ENCODE measurements at regions of chr1 and their contacts with region 1.

Region 1: GRCh38 chr1:79460773-79461436 is 454.4 kb upstream of the ADGRL4 start:
- H3K4me3 Mint-ChIP-seq: no peak overlapping the region
- H3K27ac Mint-ChIP-seq: no peak overlapping the region
- H3K4me1 Mint-ChIP-seq: no peaks in the 10 kb centered on the region
- H3K27me3 Mint-ChIP-seq: no peaks in the 10 kb centered on the region

Region 2: DNA sequence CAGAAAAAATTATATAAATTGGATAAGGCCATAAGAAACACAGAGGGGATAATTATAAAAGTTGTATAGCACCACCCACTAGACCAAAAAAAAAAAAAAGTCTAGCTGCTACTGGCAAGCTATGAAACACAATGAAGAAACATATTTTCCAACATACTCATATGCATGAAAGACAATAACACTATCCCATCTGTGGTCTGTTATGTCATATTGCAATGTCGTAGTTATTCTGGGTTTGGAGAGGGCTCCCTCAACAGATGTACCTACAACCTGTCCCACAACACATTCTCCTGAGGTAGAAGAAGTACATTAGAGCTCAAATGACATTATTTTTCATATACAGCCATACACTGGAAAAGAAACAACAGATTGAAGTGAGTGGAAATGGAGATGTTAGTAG is 63.2 kb after region 1 on chr1:
- intact Hi-C with region 1: loop called (anchors 10 kb)
- H3K4me3 Mint-ChIP-seq: no peak overlapping the region
- H3K27ac Mint-ChIP-seq: no peak overlapping the region
- H3K4me1 Mint-ChIP-seq: no peaks in the 10 kb centered on the region
- H3K27me3 Mint-ChIP-seq: no peaks in the 10 kb centered on the region

Region 3: DNA sequence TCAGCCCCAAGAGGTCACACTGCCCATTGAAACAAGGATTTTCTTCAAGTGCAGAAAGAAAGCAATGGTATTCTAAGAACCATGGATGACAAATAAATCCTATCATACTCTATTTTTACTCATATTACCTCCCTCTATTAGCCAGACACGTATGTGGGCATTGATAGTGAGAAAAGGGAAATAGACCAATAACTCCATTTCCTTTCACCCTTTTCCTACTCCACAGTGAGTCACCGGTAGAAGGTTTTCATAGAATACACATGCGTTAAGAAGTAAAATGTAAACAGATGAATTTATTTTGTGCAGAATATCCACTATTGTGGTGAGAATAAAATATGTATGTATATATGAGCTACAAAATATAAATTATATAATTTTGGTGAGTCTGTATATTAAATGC is 114.5 kb after region 1 on chr1:
- intact Hi-C with region 1: no loop called
- H3K4me3 Mint-ChIP-seq: no peak overlapping the region
- H3K27ac Mint-ChIP-seq: no peak overlapping the region
- H3K4me1 Mint-ChIP-seq: no peaks in the 10 kb centered on the region
- H3K27me3 Mint-ChIP-seq: no peaks in the 10 kb centered on the region

Measured in dendritic cell treated with granulocyte-macrophage colony-stimulating factor and Interleukin-4, amounts not matched to agents 40 ng/mL and 50 ng/mL, for 4 days (primary cell).